CD4-positive, alpha-beta memory T cell (primary cell): ENCODE measurements at regions of chr12 and their contacts with region 1.

Region 1: DNA sequence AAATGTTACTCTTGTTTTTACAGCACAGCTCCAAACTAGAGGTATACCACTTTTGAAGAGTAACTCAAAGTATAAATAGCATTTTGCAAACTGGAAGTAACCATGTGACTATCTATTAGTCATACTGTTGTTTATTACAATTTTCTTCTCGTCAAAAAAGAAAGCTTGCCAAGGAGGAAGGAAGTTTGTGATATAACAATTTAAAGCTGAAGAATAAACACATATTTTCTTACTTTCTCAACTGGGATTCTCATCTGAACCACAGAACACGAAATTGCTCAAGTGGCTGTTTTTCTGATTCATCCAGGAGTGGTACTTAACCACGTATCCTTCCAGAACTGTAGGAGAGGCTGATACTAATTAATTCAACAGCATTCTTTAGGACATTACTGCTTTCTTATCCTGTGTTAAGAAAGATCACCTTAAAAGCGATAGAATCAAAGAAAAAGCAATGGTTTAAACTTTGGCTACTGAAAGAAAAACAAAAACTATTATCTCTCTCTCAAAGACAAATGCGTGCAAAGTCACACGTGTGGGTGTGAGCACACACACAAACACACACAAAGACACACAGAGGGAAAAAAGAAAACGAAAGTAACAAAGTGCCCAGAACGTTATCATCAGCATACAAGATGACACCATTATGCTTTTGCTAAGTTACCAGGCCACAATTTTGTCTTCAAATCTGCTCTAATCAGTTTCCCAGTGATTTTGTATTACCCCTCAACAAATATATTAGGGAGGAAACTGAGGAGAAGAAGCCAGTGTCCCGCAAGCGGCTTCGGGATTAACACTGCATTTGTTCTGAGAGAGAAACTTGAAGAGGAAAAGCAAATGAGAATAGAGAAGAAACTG is at the start of gene CLEC2B:
- DNase-seq: peak; percentile 58 to 74 (median 62)
- H3K4me3 ChIP-seq: peak within 1 kb of the TSS; percentile 55 to 67
- H3K4me3 Mint-ChIP-seq: peak within 1 kb of the TSS; percentile 89 to 96 (median 92)
- H3K27ac ChIP-seq: peak within 1 kb of the TSS; percentile 83
- H3K27ac Mint-ChIP-seq: peak within 1 kb of the TSS; percentile 94 to 100 (median 96)
- H3K4me1 ChIP-seq: peaks cover 15% of the 10 kb centered on the region
- H3K4me1 Mint-ChIP-seq: peaks cover 9 to 33% (median 19%) of the 10 kb centered on the region in 4 donors
- H3K27me3 ChIP-seq: no peaks in the 10 kb centered on the region
- H3K27me3 Mint-ChIP-seq: no peaks in the 10 kb centered on the region
- total RNA-seq, gene CLEC2B: 72.5 to 74.6 TPM

Region 2: GRCh38 chr12:9647825-9648700 is 221.5 kb before region 1 on chr12:
- CTCF ChIA-PET with region 1: no interaction called
- POLR2A ChIA-PET with region 1: interaction called, 13 read pairs
- intact Hi-C with region 1: no loop called
- DNase-seq: peak; percentile 94 to 96 (median 94)
- H3K4me3 ChIP-seq: peak overlapping the region; percentile 91 to 99
- H3K4me3 Mint-ChIP-seq: peak overlapping the region; percentile 94 to 100 (median 99)
- H3K27ac ChIP-seq: peak overlapping the region; percentile 83
- H3K27ac Mint-ChIP-seq: peak overlapping the region; percentile 85 to 99 (median 97)
- H3K4me1 ChIP-seq: peaks cover 62% of the 10 kb centered on the region
- H3K4me1 Mint-ChIP-seq: peaks cover 39 to 66% (median 50%) of the 10 kb centered on the region in 4 donors
- H3K27me3 ChIP-seq: no peaks in the 10 kb centered on the region
- H3K27me3 Mint-ChIP-seq: no peaks in the 10 kb centered on the region

Region 3: GRCh38 chr12:9813821-9814809 is 55.4 kb before region 1 on chr12:
- CTCF ChIA-PET with region 1: interaction called, 31 read pairs
- POLR2A ChIA-PET with region 1: interaction called, 11 read pairs
- intact Hi-C with region 1: loop called (anchors 1 kb)
- DNase-seq: peak; percentile 86 to 90 (median 89)
- H3K4me3 ChIP-seq: peak overlapping the region; percentile 54 to 57
- H3K4me3 Mint-ChIP-seq: peak overlapping the region; percentile 81 to 94 (median 86)
- H3K27ac ChIP-seq: peak overlapping the region; percentile 33
- H3K27ac Mint-ChIP-seq: peak overlapping the region in 6 of 7 donors; percentile 32 to 84 (median 68)
- H3K4me1 ChIP-seq: peaks cover 7% of the 10 kb centered on the region
- H3K4me1 Mint-ChIP-seq: peaks cover 4 to 10% (median 8%) of the 10 kb centered on the region in 4 donors
- H3K27me3 ChIP-seq: no peaks in the 10 kb centered on the region
- H3K27me3 Mint-ChIP-seq: peaks cover 12% of the 10 kb centered on the region in 2 donors

Region 4: DNA sequence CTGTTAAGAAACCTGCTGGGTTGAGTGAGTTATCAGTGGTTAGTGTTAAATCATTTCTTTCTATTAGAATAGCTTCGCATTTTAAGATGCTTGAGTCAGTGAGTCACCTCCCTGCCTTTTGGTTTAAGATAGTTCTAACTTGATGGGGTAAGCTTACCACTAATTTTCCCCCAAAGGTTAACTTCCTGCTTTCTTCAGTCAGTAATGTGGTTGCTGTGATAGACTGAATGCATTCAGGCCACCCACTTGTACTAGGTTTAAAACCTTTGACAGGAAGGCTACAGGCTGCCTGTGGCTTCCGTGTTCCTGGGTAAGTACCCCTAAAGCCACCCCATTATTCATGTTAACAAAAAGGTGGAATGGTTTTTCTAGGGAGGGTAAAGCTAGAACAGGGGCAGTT is 37.3 kb after region 1 on chr12:
- CTCF ChIA-PET with region 1: interaction called, 4 read pairs
- POLR2A ChIA-PET with region 1: interaction called, 42 read pairs
- intact Hi-C with region 1: loop called (anchors 1 kb)
- DNase-seq: peak; percentile 42 to 63 (median 54)
- H3K4me3 ChIP-seq: no peak overlapping the region
- H3K4me3 Mint-ChIP-seq: peak overlapping the region in 7 of 8 donors; percentile 18 to 63 (median 47)
- H3K27ac ChIP-seq: no peak overlapping the region
- H3K27ac Mint-ChIP-seq: peak overlapping the region; percentile 18 to 86 (median 76)
- H3K4me1 ChIP-seq: peaks cover 22% of the 10 kb centered on the region
- H3K4me1 Mint-ChIP-seq: peaks cover 18 to 29% (median 25%) of the 10 kb centered on the region in 4 donors
- H3K27me3 ChIP-seq: no peaks in the 10 kb centered on the region
- H3K27me3 Mint-ChIP-seq: no peaks in the 10 kb centered on the region

Region 5: GRCh38 chr12:10212201-10213131 is 342.9 kb after region 1 on chr12 and contains the start of gene GABARAPL1:
- CTCF ChIA-PET with region 1: no interaction called
- POLR2A ChIA-PET with region 1: interaction called, 16 read pairs
- intact Hi-C with region 1: loop called (anchors 2 kb)
- DNase-seq: peak; percentile 84 to 94 (median 88)
- H3K4me3 ChIP-seq: peak within 1 kb of the TSS; percentile 57 to 69
- H3K4me3 Mint-ChIP-seq: peak within 1 kb of the TSS; percentile 88 to 98 (median 94)
- H3K27ac ChIP-seq: peak within 1 kb of the TSS; percentile 81
- H3K27ac Mint-ChIP-seq: peak within 1 kb of the TSS; percentile 92 to 99 (median 96)
- H3K4me1 ChIP-seq: peaks cover 32% of the 10 kb centered on the region
- H3K4me1 Mint-ChIP-seq: peaks cover 19 to 44% (median 25%) of the 10 kb centered on the region in 4 donors
- H3K27me3 ChIP-seq: no peaks in the 10 kb centered on the region
- H3K27me3 Mint-ChIP-seq: no peaks in the 10 kb centered on the region
- total RNA-seq, gene GABARAPL1: 35.3 to 36.3 TPM